ENCODE measurements at regions of chr12 and their contacts with region 1.

Region 1: DNA sequence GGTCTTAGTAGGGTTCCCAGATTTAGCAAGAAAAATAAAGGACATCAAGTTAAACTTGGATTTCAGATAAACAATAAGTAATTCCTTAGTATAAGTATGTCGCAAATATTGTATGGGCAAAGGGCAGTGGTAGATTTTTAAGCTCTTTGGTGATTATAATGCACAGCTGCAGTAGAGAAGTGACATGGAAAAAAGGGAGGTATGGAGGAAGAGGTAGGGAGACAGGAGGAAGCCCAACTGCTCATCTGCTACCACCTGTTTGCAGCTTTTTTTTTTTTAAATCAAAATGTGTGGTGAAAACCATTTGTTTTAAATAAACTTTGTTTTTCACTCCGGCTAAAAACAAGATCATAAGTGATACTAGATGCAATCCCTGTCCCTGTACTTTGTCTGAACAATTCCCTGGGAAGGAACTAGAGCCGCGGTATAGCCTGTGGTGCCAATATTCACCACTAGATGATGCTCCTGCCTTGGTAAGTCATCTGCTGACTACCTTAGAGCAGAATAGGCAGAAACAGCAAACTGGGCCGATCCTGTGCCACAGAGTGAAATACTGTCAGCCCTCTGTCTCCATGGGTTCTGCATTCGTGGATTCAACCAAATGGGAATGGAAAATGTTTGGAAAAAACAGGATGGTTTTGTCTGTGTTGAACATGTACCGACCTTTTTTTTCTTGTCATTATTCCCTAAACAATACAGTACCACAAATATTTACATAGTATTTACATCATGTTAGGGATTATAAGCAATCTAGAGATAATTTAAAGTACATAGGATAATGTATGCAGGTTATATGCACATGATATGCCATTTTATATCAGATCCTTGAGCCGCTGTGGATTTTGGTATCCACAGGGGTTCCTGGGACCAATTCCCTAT is 62.4 kb upstream of the PLBD1 start:
- DNase-seq: peak; percentile 25 to 87
- H3K4me3 ChIP-seq: no peak overlapping the region
- H3K27ac ChIP-seq: no peak overlapping the region
- H3K4me1 ChIP-seq: peaks cover 0 to 3% of the 10 kb centered on the region in 2 donors
- H3K27me3 ChIP-seq: no peaks in the 10 kb centered on the region
- CTCF ChIP-seq: peak; percentile 97 to 99 (median 98)

Region 2: GRCh38 chr12:14664510-14664909 is 34.4 kb after region 1 on chr12:
- intact Hi-C with region 1: loop called (anchors 1 kb)
- DNase-seq: no peak
- H3K4me3 ChIP-seq: no peak overlapping the region
- H3K27ac ChIP-seq: no peak overlapping the region
- H3K4me1 ChIP-seq: no peaks in the 10 kb centered on the region
- H3K27me3 ChIP-seq: no peaks in the 10 kb centered on the region
- CTCF ChIP-seq: peak; percentile 64 to 85 (median 83)

Measured in ascending aorta (tissue), 2 donors.